Activated T-helper 2 cell treated with anti-CD3 and anti-CD28 coated beads, Interferon-gamma antibody, Interleukin-2, Interleukin-4, amounts not matched to agents 10 μg/mL and 5 μg/mL and 100 μg/mL, durations not matched to agents 14 hours and 24 hours and 36 hours (primary cell): ENCODE measurements at regions of chr16 and their contacts with region 1.

Region 1: DNA sequence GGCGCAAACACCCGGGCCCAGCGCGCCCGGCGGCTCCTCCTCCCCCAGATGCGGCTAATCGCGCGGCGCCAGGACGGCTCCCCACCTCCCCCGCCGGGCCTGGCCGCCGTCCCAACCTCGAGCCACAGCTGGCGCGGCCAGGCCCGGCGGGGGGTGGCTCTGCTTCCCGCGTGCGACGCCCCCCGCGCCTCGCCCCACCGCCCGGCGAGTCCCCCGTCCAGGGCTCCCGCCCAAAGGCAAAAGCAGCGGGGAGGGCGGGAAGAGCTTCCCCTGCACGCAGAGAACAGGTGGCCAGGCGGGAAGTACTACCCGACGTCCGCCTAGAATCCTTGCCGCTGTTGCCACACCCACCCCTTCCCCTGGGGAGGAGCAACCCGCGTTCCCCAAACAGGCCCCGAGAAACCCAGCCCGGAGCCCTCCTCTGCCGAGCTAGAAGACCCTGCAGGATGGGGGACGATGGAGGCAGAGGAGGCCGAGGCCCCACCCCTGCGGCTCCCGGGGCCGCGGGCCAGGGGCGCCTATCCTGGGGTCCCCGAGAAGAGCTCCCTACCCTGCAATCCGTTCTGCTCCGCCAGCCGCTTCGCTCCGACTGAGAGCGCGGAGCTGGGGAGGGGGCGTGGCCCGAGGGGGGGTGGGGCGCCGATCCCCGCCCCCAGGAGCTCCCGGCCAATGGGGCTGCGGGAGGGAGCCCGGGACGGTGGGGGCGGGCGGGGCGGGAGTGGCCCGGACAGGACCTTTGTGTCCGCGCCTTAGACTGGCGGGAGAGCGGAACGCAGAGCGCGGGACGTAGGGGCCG is at the start of gene CARHSP1:
- DNase-seq: peak; percentile 84
- H3K4me3 Mint-ChIP-seq: peak within 1 kb of the TSS; percentile 97
- H3K27ac Mint-ChIP-seq: peak within 1 kb of the TSS; percentile 96
- H3K4me1 Mint-ChIP-seq: peaks cover 35% of the 10 kb centered on the region
- H3K27me3 Mint-ChIP-seq: no peaks in the 10 kb centered on the region
- total RNA-seq, gene CARHSP1: 84.4 and 90.8 TPM in 2 replicates

Region 2: GRCh38 chr16:8674413-8675022 is 194.1 kb before region 1 on chr16 and contains the start of gene ABAT:
- intact Hi-C with region 1: loop called (anchors 2 kb)
- DNase-seq: peak; percentile 90
- H3K4me3 Mint-ChIP-seq: peak within 1 kb of the TSS; percentile 95
- H3K27ac Mint-ChIP-seq: peak within 1 kb of the TSS; percentile 95
- H3K4me1 Mint-ChIP-seq: peaks cover 38% of the 10 kb centered on the region
- H3K27me3 Mint-ChIP-seq: no peaks in the 10 kb centered on the region
- total RNA-seq, gene ABAT: 22.5 and 24.2 TPM in 2 replicates

Region 3: DNA sequence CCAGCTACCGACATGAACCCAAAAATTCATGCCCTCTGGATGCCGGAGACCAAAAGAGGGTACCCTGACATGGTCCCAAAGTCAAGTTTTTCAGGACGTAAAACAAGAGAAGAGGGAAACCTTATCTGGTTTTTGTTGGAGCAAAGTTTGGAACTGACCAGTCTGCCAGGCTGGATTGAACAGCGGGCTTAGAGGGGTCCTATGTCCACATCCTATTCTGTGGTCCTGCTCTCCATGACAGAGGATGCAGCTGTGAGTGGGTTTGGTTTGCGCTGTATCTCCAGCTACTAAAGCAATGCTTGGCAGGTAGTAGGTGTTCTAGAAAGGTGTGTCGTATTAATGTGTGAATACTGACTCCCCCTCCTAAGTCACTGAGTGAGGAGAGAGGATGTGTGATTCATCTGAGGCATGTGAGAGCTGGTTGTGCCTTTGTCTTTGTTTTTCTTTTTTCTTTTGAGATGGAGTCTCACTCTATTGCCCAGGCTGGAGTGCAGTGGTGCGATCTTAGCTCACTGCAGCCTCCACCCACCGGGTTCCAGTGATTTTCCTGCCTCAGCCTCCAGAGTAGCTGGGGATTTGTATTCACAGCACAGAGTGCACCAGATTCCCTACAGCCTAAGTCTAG is 40.0 kb before region 1 on chr16:
- intact Hi-C with region 1: no loop called
- DNase-seq: no peak
- H3K4me3 Mint-ChIP-seq: no peak overlapping the region
- H3K27ac Mint-ChIP-seq: peak overlapping the region; percentile 40
- H3K4me1 Mint-ChIP-seq: peaks cover 5% of the 10 kb centered on the region
- H3K27me3 Mint-ChIP-seq: no peaks in the 10 kb centered on the region

Region 4: DNA sequence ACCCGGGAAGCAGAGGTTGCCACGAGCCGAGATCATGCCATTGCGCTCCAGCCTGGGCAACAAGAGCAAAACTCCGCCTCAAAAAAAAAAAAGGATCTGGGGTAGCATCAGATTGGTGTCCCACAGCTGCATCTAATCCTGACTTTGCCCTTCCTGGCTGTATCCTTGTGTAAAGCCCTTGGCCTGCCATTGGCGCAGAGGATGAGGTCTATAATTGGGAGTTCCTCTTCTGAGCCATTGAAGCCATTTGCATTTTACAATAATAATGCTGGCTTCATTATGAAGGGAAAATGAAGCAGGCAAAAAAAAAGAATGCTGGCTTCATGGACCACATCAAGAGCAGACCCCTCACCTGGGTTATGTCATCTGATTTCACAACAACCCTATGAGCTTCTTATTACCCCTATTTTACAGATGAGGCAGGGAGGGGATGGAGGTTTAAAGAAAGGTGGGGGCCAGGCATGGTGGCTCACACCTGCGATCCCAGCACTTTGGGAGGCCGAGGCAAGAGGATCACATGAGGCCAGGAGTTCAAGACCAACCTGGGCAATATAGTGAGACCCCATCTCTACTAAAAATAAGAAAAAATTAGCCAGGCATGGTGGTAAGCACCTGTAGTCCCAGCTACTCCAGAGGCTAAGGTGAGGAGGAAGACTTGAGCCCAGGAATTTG is 12.4 kb after region 1 on chr16:
- intact Hi-C with region 1: loop called (anchors 1 kb)
- DNase-seq: no peak
- H3K4me3 Mint-ChIP-seq: no peak overlapping the region
- H3K27ac Mint-ChIP-seq: no peak overlapping the region
- H3K4me1 Mint-ChIP-seq: peaks cover 3% of the 10 kb centered on the region
- H3K27me3 Mint-ChIP-seq: no peaks in the 10 kb centered on the region

Region 5: DNA sequence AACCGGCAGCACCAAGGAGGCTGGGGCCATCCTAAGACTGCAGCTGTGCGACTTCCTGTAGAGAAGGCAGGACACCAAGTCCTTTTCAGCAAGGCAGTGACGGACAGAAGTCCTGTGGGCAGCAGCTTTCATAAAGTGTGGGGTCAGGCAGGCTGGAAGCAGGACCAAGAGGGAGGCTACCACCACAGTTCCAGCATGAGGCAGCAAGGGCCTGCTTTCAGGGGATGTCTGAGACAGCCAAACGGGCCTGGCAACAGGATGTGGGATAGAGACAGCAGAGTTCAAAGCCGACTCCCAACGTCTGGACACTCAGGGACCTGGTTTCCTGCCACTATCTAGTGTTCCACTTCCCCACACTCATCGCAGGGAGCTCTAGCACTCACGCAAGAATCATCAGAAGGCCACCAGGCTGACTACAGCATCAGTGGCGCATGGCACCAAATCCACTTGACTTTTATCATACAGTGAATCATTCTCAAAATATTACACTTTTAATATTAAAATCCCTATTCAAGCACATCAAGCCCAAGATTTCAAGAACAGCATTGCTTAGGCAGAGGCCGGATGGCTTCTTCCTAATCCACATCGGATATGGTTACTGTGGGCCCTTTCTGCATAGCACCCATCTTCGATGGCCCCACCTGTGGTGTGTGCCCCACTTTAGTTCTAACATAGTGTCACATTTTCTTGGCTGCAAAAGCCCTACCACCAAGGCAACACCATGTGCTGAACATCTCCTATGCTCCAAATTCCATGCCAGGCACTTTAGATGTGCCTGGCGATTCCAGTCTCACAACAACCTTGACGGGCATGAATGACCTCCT is 89.9 kb after region 1 on chr16:
- intact Hi-C with region 1: loop called (anchors 2 kb)
- DNase-seq: peak; percentile 18
- H3K4me3 Mint-ChIP-seq: peak overlapping the region; percentile 75
- H3K27ac Mint-ChIP-seq: peak overlapping the region; percentile 77
- H3K4me1 Mint-ChIP-seq: peaks cover 67% of the 10 kb centered on the region
- H3K27me3 Mint-ChIP-seq: no peaks in the 10 kb centered on the region